Kidney (tissue), 22 donors: ENCODE measurements at regions of chr2 and their contacts with region 1.

Region 1: GRCh38 chr2:134411828-134412638 is 158.2 kb downstream of the MGAT5 start:
- DNase-seq: peak; percentile 79 to 93 (median 83)
- H3K4me3 ChIP-seq: no peak overlapping the region
- H3K27ac ChIP-seq: no peak overlapping the region
- H3K4me1 ChIP-seq: peaks cover 0 to 2% (median 0%) of the 10 kb centered on the region in 3 donors
- H3K27me3 ChIP-seq: no peaks in the 10 kb centered on the region
- CTCF ChIP-seq: peak; percentile 71

Region 2: DNA sequence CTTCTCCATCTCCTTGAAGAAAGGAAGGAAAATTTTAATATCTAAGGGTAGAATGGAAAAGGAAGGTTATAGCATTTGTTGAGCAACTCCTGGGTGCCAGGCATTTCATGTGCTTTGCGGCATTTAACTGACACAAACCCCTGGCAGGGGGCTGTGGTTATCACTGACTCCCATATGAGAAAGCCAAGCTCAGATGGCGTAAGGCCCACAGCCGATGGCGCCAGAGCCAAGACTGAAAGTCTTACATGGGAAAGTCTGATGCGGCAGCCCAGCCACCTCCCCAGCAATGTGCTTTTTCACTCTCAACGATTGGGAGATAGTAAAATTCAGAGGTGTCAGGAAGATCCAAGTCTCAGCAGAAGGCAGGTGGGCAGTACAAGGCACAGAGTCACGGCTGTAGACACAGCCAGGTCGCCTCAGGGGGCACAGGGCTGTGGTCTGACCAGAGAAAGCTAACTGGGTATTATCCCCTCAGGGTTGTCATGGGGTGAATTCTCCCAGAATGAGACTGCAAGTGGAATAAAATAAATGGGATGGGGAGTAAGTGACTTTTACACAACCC is 519.6 kb before region 1 on chr2:
- intact Hi-C with region 1: loop called (anchors 5 kb)
- DNase-seq: no peak
- H3K4me3 ChIP-seq: no peak overlapping the region
- H3K27ac ChIP-seq: no peak overlapping the region
- H3K4me1 ChIP-seq: no peaks in the 10 kb centered on the region
- H3K27me3 ChIP-seq: no peaks in the 10 kb centered on the region
- CTCF ChIP-seq: no peak

Region 3: DNA sequence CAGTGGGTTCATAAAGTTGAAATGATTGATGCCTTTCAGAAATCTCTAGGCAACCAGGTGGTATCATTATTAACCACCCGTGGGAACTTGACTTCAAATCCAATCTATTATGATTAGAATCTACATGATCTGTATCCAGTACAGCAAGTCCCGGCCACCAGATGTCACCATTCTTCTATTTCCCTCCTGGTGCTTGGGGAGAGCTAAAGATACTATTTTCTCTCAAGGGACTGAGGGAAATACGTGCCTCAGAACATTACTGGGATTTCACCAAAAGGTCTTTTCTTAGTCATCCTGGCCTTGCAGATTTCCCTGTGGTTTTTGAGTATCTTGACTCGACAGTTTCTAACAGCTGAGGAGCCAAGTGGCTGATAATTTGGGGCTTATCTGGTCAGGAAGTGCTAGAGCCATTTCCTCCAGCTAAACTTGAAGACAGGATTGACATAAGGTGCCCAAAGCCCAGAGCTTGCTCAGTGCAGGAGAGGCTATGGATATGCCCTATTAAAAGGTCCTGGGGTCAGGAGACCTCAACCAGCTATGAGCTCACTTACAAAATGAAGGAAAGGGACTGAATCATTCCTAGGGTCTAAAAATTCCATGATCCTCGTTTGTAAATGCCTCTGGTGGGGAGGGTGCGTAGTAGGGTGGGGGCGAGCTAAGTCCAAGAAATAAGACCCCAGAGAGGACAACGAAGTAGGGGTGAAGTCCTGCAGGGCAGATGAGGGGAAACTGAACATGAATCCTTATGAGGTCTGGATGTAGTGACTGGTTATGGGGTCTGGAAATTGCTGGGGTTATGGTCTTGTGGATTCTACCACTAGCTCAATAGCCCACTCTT is 293.5 kb before region 1 on chr2:
- intact Hi-C with region 1: loop called (anchors 10 kb)
- DNase-seq: peak; percentile 77 to 95 (median 89)
- H3K4me3 ChIP-seq: no peak overlapping the region
- H3K27ac ChIP-seq: peak overlapping the region in 1 of 2 donors; percentile 25
- H3K4me1 ChIP-seq: peaks cover 0 to 15% (median 3%) of the 10 kb centered on the region in 3 donors
- H3K27me3 ChIP-seq: no peaks in the 10 kb centered on the region
- CTCF ChIP-seq: peak; percentile 93

Region 4: DNA sequence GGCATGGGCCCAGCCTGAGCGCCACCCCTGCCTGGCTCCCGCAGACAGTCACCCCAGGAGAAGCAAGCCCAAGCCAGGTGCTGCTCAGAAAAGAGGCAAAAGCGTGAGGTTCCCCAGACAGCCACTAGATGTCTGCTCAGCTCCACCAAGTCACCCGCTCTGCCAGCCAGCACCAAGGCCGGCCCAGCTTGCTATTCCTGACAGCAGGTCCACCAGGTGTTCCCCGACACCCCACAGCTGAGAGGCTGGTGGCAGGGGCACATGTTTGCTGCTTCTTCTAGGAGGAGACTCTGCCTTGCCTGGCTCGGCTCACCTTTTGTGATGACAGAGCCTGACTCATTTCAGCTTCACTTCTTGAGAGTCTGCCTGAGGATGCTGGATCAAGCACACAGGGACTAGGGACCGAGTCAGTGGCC is 48.6 kb after region 1 on chr2:
- intact Hi-C with region 1: no loop called
- DNase-seq: peak; percentile 73 to 86 (median 79)
- H3K4me3 ChIP-seq: no peak overlapping the region
- H3K27ac ChIP-seq: no peak overlapping the region
- H3K4me1 ChIP-seq: peaks cover 0 to under 1% (median 0%) of the 10 kb centered on the region in 3 donors
- H3K27me3 ChIP-seq: no peaks in the 10 kb centered on the region
- CTCF ChIP-seq: peak; percentile 73